ENCODE measurements at regions of chr3 and their contacts with region 1.

Region 1: GRCh38 chr3:97882975-97883598 is 61.3 kb downstream of the CRYBG3 start:
- DNase-seq: peak in 2 of 9 experiments; percentile 29 to 38
- ATAC-seq: no peak
- H3K4me3 ChIP-seq: no peak overlapping the region
- H3K4me3 Mint-ChIP-seq: no peak overlapping the region
- H3K27ac ChIP-seq: no peak overlapping the region
- H3K27ac Mint-ChIP-seq: no peak overlapping the region
- H3K4me1 ChIP-seq: peaks cover 9% of the 10 kb centered on the region
- H3K4me1 Mint-ChIP-seq: peaks cover 11% of the 10 kb centered on the region
- H3K27me3 ChIP-seq: no peaks in the 10 kb centered on the region
- H3K27me3 Mint-ChIP-seq: no peaks in the 10 kb centered on the region
- CTCF ChIP-seq: no peak

Region 2: GRCh38 chr3:97835761-97836160 is 47.3 kb before region 1 on chr3:
- CTCF ChIA-PET with region 1: no interaction called
- POLR2A ChIA-PET with region 1: no interaction called
- intact Hi-C with region 1: loop called in 1 of 2 experiments (anchors 5 kb)
- DNase-seq: no peak
- ATAC-seq: no peak
- H3K4me3 ChIP-seq: no peak overlapping the region
- H3K4me3 Mint-ChIP-seq: no peak overlapping the region
- H3K27ac ChIP-seq: no peak overlapping the region
- H3K27ac Mint-ChIP-seq: no peak overlapping the region
- H3K4me1 ChIP-seq: no peaks in the 10 kb centered on the region
- H3K4me1 Mint-ChIP-seq: no peaks in the 10 kb centered on the region
- H3K27me3 ChIP-seq: no peaks in the 10 kb centered on the region
- H3K27me3 Mint-ChIP-seq: no peaks in the 10 kb centered on the region
- CTCF ChIP-seq: no peak

Region 3: DNA sequence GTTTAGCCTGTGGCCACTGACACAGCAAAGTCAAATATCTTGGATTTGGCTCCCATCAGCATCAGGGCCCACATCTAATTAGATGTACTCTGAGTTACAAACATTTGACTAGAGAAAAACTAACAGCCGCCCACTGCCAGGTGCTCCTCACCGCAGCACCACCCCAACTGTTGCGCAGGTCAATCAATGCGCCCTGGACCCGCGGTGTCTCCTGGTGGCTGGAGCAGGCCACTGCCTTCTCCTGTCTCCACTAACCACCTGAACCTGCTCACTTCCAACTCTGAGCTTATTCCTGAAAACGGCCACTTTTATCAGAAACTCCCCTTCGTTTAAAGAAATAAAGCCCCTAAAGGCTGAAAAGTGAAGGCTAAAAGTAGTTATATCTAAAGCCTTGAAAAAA is 84.9 kb after region 1 on chr3:
- CTCF ChIA-PET with region 1: no interaction called
- POLR2A ChIA-PET with region 1: no interaction called
- intact Hi-C with region 1: no loop called
- DNase-seq: no peak
- ATAC-seq: no peak
- H3K4me3 ChIP-seq: no peak overlapping the region
- H3K4me3 Mint-ChIP-seq: no peak overlapping the region
- H3K27ac ChIP-seq: no peak overlapping the region
- H3K27ac Mint-ChIP-seq: no peak overlapping the region
- H3K4me1 ChIP-seq: peaks cover 39% of the 10 kb centered on the region
- H3K4me1 Mint-ChIP-seq: peaks cover 79% of the 10 kb centered on the region
- H3K27me3 ChIP-seq: no peaks in the 10 kb centered on the region
- H3K27me3 Mint-ChIP-seq: no peaks in the 10 kb centered on the region
- CTCF ChIP-seq: no peak

Measured in CD8-positive, alpha-beta T cell (primary cell).